ENCODE measurements at regions of chr12 and their contacts with region 1.

Region 1: DNA sequence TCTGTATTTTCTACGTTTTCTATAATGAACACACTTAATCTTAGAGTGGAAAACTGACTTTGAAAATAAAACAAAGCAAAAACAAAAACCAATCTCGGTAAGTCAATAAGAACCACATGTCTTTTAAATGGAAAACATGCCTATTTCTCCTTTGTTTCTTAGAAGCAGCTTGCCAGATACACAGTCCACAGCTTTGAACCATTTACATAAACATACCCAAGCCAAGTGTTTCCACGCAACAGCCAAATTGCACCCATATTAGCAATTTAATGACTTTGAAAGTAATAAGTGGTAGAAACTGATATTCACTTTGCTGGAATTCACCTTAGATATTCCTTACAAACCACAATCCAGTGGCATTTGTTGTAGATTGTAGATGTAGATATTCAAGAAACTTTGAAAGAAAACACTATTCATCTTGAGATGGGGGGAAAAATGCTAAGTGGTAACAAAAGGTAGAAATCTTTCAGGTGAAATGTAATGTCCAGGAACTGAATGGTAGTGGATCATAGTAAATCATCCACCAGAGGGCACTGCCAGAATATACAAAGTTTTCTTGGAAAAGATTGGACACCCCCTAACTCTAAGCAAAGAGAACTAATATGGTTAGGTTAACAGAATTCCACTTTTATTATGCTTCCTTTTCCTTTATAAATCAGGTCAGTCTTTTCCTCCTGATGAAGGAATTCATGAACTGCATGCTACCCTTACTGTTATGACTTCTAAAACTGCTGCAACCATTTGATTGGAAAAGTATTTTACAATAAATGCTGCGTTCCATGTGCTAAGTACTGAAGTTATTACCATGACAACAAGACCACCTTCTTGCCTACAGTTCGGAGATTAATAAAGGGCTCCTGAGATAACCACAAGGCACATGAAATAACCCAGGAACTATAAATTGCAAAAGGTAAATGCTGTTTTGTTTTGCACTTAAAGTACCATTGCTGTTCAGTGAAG is 69.8 kb downstream of the RERG start:
- DNase-seq: no peak

Region 2: GRCh38 chr12:15181017-15181683 is 29.7 kb after region 1 on chr12:
- intact Hi-C with region 1: no loop called
- DNase-seq: no peak

Region 3: DNA sequence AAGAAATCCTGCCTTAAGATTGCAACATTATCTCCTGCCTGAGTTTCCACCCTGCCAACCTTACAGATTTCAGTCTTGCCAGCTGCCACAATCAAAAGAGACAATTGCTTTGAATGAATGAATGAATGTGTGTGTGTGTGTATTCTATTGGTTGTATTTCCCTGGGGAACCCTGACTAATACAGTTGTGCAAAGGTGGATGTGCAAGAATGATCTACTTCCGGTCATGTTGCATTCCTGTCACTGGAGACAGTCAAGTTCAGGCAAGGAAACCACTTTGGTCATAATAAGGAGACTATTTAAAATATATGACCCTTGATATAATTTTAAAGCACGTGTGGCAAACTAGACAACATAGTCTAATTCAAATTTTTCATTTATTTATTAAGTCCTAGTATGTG is 56.7 kb after region 1 on chr12:
- intact Hi-C with region 1: loop called (anchors 5 kb)
- DNase-seq: no peak

Region 4: DNA sequence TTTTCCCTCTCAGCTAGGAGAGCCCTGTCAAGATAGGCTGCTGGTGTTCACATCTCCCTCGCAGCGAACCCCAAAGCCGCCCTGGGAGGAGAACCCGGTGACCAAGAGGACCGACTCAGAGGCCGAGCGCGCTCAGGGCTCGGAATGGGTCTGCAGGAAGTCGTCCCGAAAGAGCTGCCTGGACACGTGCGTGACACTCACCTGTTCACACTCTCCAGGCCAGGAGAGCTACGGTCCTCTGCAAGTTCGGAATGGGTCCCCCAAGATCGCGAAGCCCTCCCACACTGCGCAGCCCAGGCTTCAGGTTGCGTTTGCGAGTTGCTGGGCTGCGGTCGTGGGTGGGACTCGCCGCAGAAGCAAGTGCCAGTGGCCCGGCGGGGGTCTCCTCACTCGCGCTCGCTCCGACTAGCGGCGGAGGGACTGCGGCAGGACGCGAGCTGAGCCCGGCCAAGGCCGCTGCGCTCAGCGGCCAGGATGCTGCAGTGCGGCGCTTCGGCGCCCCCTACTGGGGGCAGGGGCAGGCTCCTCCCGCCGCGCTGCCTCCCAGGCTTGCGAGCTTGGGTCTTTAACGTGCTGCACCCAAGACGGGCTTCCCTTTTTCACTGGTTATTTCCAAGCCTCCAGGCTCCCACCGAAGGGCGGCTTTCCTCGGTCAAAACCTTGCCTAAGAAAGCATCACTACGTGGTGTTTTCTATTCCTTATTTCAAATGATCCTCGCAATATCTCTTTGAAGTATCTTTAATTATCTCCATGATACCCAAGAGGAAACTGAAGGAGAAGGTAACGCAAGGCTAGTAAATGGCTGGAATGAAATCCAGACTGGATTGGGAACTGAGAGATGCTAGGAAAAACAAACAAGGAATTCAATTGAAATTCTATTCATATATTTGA is 69.8 kb after region 1 on chr12 and contains the start of gene RERG:
- intact Hi-C with region 1: loop called (anchors 1 kb)
- DNase-seq: peak; percentile 66 to 97 (median 80)

Region 5: DNA sequence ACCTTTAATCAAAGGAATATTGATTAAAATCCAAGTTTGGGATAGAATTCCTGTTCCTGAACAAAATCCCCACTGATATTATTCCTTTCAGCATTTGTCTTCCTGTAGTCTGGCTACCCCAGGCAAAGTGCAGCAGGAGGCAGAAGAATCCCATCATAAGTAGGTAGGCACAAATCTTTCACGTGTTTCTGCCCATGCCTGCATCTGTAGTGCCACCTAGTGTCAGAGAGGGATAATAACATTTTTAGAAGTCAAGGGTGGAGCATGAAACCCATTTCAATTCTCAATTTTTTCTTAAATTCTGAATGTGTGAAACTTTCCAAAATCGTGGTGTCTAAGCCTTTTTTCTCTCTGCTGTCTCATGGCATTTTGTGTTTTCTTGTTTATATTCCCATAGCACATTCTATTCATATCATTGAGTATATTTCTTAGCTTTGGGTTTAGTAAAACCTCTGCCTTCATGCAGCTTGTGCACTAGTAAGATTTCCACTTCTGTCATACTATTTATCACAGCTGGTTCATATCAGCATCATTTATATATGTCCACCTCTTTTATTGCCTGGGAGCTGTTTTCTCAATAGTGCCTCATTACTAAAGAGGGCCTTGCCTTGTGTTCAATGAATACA is 117.6 kb after region 1 on chr12:
- intact Hi-C with region 1: loop called (anchors 5 kb)
- DNase-seq: peak in 2 of 10 donors; percentile 20 to 33

Measured in posterior cingulate gyrus (tissue), 11 donors.